Psoas muscle (tissue), 8 donors: ENCODE measurements at regions of chr18 and their contacts with region 1.

Region 1: GRCh38 chr18:61860302-61860701 is 32.5 kb downstream of the RNF152 start:
- DNase-seq: no peak
- ATAC-seq: no peak
- H3K4me3 ChIP-seq: no peak overlapping the region
- H3K27ac ChIP-seq: no peak overlapping the region
- H3K4me1 ChIP-seq: no peaks in the 10 kb centered on the region
- H3K27me3 ChIP-seq: no peaks in the 10 kb centered on the region
- CTCF ChIP-seq: no peak

Region 2: DNA sequence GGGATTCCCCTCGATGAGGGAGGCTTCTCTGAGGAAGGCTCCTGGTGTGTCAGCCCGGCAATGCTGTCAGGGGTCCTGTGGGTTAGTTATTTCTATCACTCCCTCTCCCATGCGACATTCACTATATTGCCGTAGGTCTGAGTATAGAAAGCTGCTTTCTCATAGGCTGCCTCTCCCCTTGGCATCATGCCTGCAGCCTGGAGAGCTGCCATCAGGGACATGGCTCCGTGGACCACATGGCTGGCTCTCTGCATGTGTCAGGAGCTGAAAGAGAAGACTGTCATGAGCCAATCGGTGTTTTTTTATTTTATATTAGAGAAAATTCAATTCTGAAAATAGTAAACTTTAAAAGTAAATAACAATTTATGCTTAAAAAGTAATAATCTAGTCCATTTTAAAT is 329.1 kb before region 1 on chr18:
- intact Hi-C with region 1: no loop called
- DNase-seq: no peak
- ATAC-seq: no peak
- H3K4me3 ChIP-seq: no peak overlapping the region
- H3K27ac ChIP-seq: no peak overlapping the region
- H3K4me1 ChIP-seq: no peaks in the 10 kb centered on the region
- H3K27me3 ChIP-seq: no peaks in the 10 kb centered on the region
- CTCF ChIP-seq: no peak

Region 3: GRCh38 chr18:61651883-61652268 is 208.4 kb before region 1 on chr18:
- intact Hi-C with region 1: no loop called
- DNase-seq: no peak
- ATAC-seq: no peak
- H3K4me3 ChIP-seq: no peak overlapping the region
- H3K27ac ChIP-seq: no peak overlapping the region
- H3K4me1 ChIP-seq: no peaks in the 10 kb centered on the region
- H3K27me3 ChIP-seq: no peaks in the 10 kb centered on the region
- CTCF ChIP-seq: no peak

Region 4: DNA sequence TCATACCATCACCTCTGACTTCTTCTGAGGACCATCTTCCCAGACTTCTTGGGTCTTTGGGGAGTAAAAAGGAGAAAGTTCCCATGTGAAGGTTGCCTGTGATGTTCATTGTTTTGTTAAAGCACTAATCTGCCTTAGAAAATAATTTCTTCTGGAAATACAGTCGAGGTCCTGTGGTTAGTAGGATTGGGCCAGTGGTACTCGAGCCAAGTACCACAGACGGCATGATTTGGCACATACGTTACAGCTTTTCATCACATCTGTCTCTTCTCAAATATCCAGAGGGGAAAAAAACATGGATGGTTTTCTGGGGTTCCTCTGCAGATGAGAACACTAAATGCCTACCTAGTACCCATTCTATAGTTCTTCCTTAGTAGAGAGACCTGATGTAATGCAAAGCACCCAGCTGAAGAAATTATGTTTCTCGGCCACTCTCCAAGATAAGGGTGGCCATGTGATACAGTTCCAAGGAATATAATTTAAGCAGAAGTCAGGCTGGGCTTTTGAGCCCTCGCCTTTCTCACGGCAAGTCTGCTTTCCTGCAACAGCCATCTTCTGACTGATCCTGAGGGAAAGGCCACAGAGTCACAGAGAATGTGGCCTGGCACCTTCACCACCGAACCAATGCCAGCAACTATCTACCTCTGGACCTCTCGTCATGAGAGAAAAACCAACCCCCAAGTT is 128.5 kb before region 1 on chr18:
- intact Hi-C with region 1: loop called in 1 of 2 experiments (anchors 5 kb)
- DNase-seq: no peak
- ATAC-seq: no peak
- H3K4me3 ChIP-seq: no peak overlapping the region
- H3K27ac ChIP-seq: peak overlapping the region; percentile 65
- H3K4me1 ChIP-seq: no peaks in the 10 kb centered on the region
- H3K27me3 ChIP-seq: no peaks in the 10 kb centered on the region
- CTCF ChIP-seq: no peak

Region 5: GRCh38 chr18:61754039-61754583 is 106.2 kb before region 1 on chr18:
- intact Hi-C with region 1: no loop called
- DNase-seq: no peak
- ATAC-seq: no peak
- H3K4me3 ChIP-seq: no peak overlapping the region
- H3K27ac ChIP-seq: no peak overlapping the region
- H3K4me1 ChIP-seq: no peaks in the 10 kb centered on the region
- H3K27me3 ChIP-seq: no peaks in the 10 kb centered on the region
- CTCF ChIP-seq: no peak